ENCODE measurements at regions of chr15 and their contacts with region 1.

Region 1: DNA sequence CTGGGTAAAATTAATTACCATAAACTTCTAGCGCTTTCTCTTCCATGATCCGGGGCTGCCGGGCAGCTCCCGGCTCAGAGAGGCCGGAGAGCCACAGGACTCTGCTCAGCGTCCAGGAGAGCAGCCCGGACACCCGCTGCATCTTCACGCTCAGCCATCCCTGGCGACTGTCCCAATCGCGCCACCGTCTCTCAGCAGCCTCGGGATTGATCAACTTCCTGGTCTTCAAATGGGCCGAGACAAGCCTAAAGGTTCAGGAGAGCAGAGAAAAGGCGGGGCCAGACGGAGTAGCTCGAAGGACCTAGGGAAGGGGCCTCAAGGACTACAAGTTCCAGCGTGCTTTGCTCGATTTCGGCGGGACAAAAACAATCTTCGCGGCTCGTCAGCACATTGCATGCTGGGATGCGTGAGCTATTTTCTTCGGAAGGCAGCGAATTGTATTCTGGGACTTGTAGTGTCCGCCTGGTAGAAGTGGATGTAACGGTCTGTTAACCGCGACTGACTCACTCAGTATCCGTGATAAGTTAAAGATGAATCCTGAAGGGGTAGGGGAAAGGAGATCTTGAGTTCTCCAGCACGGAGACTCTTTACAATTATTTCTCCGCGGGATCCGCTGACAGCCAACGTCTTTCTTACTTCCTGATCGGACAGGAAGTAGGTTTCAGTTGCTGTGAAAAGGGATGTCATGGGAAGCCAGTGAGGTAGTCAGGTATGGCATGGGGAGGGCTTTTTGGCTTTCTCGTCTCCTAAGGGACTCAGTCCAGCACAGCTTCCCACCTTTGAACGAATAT is at the start of gene CIAO2A:
- DNase-seq: peak; percentile 99
- ATAC-seq: peak; percentile 81
- H3K4me3 Mint-ChIP-seq: peak within 1 kb of the TSS; percentile 99
- H3K27ac Mint-ChIP-seq: peak within 1 kb of the TSS; percentile 98
- H3K4me1 Mint-ChIP-seq: peaks cover 66% of the 10 kb centered on the region
- H3K27me3 Mint-ChIP-seq: no peaks in the 10 kb centered on the region
- total RNA-seq, gene CIAO2A: 66.4 to 80.2 TPM

Region 2: GRCh38 chr15:63610200-63610841 is 483.5 kb before region 1 on chr15:
- CTCF ChIA-PET with region 1: interaction called, 16 read pairs
- DNase-seq: peak; percentile 92
- ATAC-seq: peak; percentile 89
- H3K4me3 Mint-ChIP-seq: peak overlapping the region; percentile 8
- H3K27ac Mint-ChIP-seq: peak overlapping the region; percentile 94
- H3K4me1 Mint-ChIP-seq: peaks cover 39% of the 10 kb centered on the region
- H3K27me3 Mint-ChIP-seq: no peaks in the 10 kb centered on the region

Region 3: GRCh38 chr15:63998489-63998888 is 95.3 kb before region 1 on chr15:
- CTCF ChIA-PET with region 1: no interaction called
- DNase-seq: no peak
- ATAC-seq: no peak
- H3K4me3 Mint-ChIP-seq: no peak overlapping the region
- H3K27ac Mint-ChIP-seq: no peak overlapping the region
- H3K4me1 Mint-ChIP-seq: peaks cover 38% of the 10 kb centered on the region
- H3K27me3 Mint-ChIP-seq: no peaks in the 10 kb centered on the region

Region 4: GRCh38 chr15:64067564-64068030 is 26.2 kb before region 1 on chr15:
- CTCF ChIA-PET with region 1: interaction called, 18 read pairs
- DNase-seq: peak; percentile 79
- ATAC-seq: peak; percentile 87
- H3K4me3 Mint-ChIP-seq: no peak overlapping the region
- H3K27ac Mint-ChIP-seq: peak overlapping the region; percentile 57
- H3K4me1 Mint-ChIP-seq: peaks cover 23% of the 10 kb centered on the region
- H3K27me3 Mint-ChIP-seq: no peaks in the 10 kb centered on the region

Region 5: GRCh38 chr15:64162870-64163658 is 69.2 kb after region 1 on chr15 and contains the start of gene PPIB:
- CTCF ChIA-PET with region 1: interaction called, 12 read pairs
- DNase-seq: peak; percentile 98
- ATAC-seq: peak; percentile 95
- H3K4me3 Mint-ChIP-seq: peak within 1 kb of the TSS; percentile 81
- H3K27ac Mint-ChIP-seq: peak within 1 kb of the TSS; percentile 96
- H3K4me1 Mint-ChIP-seq: peaks cover 51% of the 10 kb centered on the region
- H3K27me3 Mint-ChIP-seq: no peaks in the 10 kb centered on the region
- total RNA-seq, gene PPIB: 308 to 386 TPM